ENCODE measurements at regions of chr16 and their contacts with region 1.

Region 1: DNA sequence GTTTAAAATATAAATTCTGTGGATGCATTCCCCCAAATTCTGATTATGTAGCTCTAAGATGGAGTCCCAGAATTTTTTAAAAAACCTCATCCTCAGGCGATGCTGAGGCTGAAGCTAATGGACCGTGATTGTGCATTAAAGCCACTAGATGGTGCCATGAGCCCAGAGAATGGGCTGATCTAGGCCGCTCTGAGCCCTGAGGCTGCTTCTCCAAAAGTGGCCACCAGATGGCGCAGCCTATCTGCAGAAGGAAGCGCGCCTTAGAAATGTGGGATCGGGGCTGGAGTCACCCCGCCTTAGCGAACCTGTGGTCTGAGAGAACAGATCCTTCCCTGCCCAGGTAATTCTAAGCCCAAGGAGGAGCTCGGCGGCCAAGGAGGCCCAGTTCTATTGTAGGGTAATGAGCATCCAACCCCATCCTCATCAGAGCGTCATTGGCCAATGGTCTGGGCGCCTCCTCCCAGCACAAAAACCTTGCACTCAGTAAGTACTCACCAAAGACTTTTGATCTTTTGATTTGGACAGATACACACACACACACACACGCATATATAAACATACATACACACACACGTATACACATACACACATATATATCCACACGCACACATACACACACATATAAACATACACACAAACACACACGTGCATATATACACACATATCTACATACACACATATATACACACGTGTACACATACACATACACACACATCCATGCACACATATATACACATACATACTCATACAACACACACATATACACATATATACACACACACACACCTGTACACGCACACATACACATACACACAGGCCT is 13.7 kb upstream of the MMP2 start:
- DNase-seq: peak; percentile 84 to 98
- H3K4me3 ChIP-seq: no peak overlapping the region
- H3K27ac ChIP-seq: no peak overlapping the region
- H3K4me1 ChIP-seq: no peaks in the 10 kb centered on the region
- H3K27me3 ChIP-seq: peaks cover 0 to 1% (median 0%) of the 10 kb centered on the region in 4 experiments; a peak in 3 of 7 replicates
- CTCF ChIP-seq: peak; percentile 85 to 100 (median 99)
- EP300 ChIP-seq: no peak; a peak in 1 of 3 replicates
- POLR2A ChIP-seq: no peak
- RAD21 ChIP-seq: peak; percentile 100

Region 2: DNA sequence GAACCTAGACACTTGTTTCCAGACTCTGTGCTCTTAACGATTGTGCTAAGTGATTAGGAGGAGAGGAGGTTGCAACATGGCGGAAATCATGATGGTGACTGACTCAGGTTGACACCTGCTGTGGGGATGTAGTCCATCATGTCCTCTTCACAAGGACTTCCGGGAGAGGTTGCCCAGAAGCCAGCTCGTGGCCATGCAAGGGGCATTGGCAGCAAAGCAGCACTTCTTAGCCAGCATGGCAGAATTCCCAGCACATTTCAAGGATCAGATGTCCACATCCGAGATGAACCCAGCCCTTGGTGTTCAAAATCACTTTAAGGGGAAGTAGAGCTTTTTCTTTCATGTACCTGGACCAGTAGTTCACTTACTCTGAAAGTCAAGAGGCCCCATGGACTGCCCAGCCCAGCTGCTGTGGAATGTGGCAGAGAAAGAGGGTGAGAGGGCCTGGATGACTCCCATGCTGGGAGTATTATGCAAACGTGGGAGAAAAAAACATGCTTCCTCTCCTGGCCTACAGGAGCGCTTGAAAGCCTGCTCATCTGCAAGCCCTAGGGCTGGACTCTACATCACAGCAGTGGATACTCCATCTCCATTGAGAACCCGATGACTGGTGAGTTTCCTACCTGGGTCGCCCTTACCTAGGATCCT is 75.7 kb before region 1 on chr16:
- CTCF ChIA-PET with region 1: no interaction called
- POLR2A ChIA-PET with region 1: no interaction called
- DNase-seq: no peak
- H3K4me3 ChIP-seq: no peak overlapping the region
- H3K27ac ChIP-seq: no peak overlapping the region
- H3K4me1 ChIP-seq: peaks cover 0 to 9% (median 7%) of the 10 kb centered on the region in 4 experiments; a peak in 6 of 7 replicates
- H3K27me3 ChIP-seq: no peaks in the 10 kb centered on the region
- CTCF ChIP-seq: no peak
- EP300 ChIP-seq: no peak
- POLR2A ChIP-seq: no peak
- RAD21 ChIP-seq: no peak

Region 3: GRCh38 chr16:55426865-55427484 is 38.3 kb before region 1 on chr16:
- CTCF ChIA-PET with region 1: interaction called, 10 read pairs
- POLR2A ChIA-PET with region 1: no interaction called
- DNase-seq: no peak
- H3K4me3 ChIP-seq: no peak overlapping the region
- H3K27ac ChIP-seq: no peak overlapping the region
- H3K4me1 ChIP-seq: no peaks in the 10 kb centered on the region
- H3K27me3 ChIP-seq: no peaks in the 10 kb centered on the region
- CTCF ChIP-seq: no peak
- EP300 ChIP-seq: no peak
- POLR2A ChIP-seq: no peak
- RAD21 ChIP-seq: no peak

Region 4: GRCh38 chr16:55502801-55503366 is 37.6 kb after region 1 on chr16:
- CTCF ChIA-PET with region 1: interaction called, 47 read pairs
- POLR2A ChIA-PET with region 1: no interaction called
- DNase-seq: no peak
- H3K4me3 ChIP-seq: no peak overlapping the region
- H3K27ac ChIP-seq: no peak overlapping the region
- H3K4me1 ChIP-seq: 0 out of 7 replicates have a peak, but pooled peaks cover 0 to 2% (median 0%) of the 10 kb centered on the region in 4 experiments
- H3K27me3 ChIP-seq: no peaks in the 10 kb centered on the region
- CTCF ChIP-seq: no peak
- EP300 ChIP-seq: no peak
- POLR2A ChIP-seq: no peak
- RAD21 ChIP-seq: no peak

Region 5: DNA sequence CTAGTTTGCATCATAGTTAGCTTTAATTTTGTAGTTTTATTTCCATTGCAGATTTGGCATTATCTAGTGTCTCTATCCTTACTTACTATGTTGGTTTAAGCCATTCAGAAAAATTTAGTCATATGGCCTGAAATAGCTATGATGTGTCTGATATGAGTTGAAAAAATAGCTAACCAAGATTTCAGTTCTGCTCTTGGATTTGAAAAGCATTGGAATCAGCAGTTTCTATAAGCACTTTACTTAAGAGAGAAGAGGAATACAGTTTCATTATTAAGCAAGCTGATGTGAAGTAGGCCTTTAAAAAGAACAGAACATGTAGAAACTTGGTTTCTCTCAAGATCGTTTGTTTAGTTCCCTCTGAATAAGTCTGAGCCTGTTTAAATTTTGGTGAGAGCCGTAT is 69.5 kb after region 1 on chr16:
- CTCF ChIA-PET with region 1: interaction called, 23 read pairs
- POLR2A ChIA-PET with region 1: no interaction called
- DNase-seq: no peak
- H3K4me3 ChIP-seq: no peak overlapping the region
- H3K27ac ChIP-seq: no peak overlapping the region
- H3K4me1 ChIP-seq: no peaks in the 10 kb centered on the region
- H3K27me3 ChIP-seq: no peaks in the 10 kb centered on the region
- CTCF ChIP-seq: no peak
- EP300 ChIP-seq: no peak
- POLR2A ChIP-seq: no peak
- RAD21 ChIP-seq: no peak

Region 6: DNA sequence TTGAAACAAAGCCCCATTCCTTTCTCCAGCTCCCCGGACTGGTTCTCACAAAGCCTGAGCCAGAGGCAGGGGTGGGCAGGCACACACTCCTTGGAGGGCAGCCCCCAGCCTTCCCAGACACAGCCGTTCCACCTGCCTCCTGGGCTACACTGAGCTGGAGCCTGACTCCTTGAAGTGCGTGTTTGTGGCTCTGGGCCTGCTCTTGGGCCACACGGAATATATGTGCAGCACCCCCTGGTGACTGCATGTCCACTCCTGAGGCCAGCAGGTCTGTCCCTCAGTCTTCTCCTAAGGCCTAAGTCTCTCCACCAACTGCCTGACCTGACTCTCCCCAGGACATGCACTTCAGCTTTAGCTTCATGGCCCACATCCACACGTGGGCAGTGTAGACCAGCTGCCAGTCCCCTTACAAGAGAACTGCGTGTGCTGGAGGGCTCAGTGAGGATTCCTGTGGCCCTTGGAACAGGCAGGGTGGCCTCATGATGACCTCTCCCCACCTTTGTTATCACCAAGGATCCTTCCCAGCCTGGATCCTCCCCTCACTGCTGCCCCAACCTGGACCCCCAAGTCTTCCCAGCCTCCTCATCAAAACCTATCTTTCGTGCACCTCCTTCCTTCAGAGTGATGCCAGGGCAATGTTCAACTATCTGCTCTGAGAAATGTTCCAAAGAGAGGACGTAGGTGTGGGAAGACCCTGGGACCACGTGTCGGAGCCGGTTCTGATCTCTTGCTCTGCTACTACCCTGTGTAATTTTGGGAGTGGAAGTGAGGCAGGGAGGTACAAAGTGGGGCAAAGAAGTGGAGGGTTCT is 178.1 kb after region 1 on chr16:
- CTCF ChIA-PET with region 1: interaction called, 11 read pairs
- POLR2A ChIA-PET with region 1: no interaction called
- DNase-seq: no peak
- H3K4me3 ChIP-seq: no peak overlapping the region
- H3K27ac ChIP-seq: no peak overlapping the region
- H3K4me1 ChIP-seq: no peaks in the 10 kb centered on the region
- H3K27me3 ChIP-seq: peaks cover 0 to 2% (median 0%) of the 10 kb centered on the region in 4 experiments; a peak in 2 of 7 replicates
- CTCF ChIP-seq: no peak
- EP300 ChIP-seq: no peak
- POLR2A ChIP-seq: no peak
- RAD21 ChIP-seq: no peak; a peak in 1 of 4 replicates

Region 7: DNA sequence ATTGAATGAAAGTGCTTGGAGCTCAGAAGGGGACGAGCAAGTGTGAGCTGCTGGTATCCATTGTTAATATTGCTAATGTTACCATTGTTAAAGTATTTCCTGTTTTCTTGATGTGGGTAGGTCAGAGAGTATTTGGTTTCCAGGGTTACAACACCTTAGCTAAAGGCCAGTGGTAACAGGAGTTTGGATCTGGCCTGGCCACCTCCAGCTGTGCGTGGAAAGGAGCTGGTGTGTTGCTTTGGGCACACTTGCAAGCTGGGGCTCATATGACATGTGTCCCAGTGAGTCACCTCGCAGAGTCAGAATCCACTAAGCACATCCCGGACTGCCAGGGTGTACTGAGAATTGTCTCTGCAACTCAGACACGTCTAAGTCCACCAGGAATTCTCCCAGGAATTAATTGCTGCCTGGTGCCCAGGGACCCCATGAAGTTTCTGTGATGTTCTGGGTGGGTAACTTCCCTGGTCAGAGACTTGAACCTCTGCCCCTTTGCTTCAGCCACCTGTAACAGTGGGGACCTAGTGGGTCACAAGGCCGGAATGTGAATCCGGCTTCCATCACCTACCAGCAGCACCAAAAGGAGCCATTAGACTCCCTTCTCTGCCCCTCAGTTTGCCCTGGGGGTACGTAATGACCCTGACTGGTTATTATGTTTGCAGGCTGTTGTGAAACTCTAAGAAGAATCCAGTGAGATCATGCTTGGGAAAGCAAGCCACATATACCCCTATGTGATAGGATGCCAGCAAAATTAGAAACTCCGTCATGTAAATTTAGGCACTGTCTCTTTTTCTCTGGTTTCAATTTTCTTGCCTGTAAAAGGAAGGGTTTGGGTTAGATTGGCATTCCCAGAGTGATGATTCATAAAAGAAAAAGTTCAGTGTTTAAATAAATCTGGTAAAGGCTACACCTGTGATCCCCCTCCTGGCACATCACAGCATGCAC is 203.3 kb after region 1 on chr16:
- CTCF ChIA-PET with region 1: interaction called, 11 read pairs
- POLR2A ChIA-PET with region 1: no interaction called
- DNase-seq: peak in 1 of 2 experiments; percentile 5
- H3K4me3 ChIP-seq: no peak overlapping the region
- H3K27ac ChIP-seq: no peak overlapping the region
- H3K4me1 ChIP-seq: peaks cover 2 to 11% (median 5%) of the 10 kb centered on the region in 4 experiments; a peak in 5 of 7 replicates
- H3K27me3 ChIP-seq: no peaks in the 10 kb centered on the region
- CTCF ChIP-seq: no peak
- EP300 ChIP-seq: no peak
- POLR2A ChIP-seq: no peak
- RAD21 ChIP-seq: no peak

Region 8: GRCh38 chr16:55842369-55843104 is 377.2 kb after region 1 on chr16:
- CTCF ChIA-PET with region 1: interaction called, 27 read pairs
- POLR2A ChIA-PET with region 1: no interaction called
- DNase-seq: peak in 1 of 2 experiments; percentile 43
- H3K4me3 ChIP-seq: no peak overlapping the region
- H3K27ac ChIP-seq: no peak overlapping the region
- H3K4me1 ChIP-seq: no peaks in the 10 kb centered on the region
- H3K27me3 ChIP-seq: no peaks in the 10 kb centered on the region
- CTCF ChIP-seq: peak in 2 of 3 experiments; percentile 60 to 70; a peak in 3 of 4 replicates
- EP300 ChIP-seq: no peak
- POLR2A ChIP-seq: no peak
- RAD21 ChIP-seq: peak; percentile 88

Region 9: DNA sequence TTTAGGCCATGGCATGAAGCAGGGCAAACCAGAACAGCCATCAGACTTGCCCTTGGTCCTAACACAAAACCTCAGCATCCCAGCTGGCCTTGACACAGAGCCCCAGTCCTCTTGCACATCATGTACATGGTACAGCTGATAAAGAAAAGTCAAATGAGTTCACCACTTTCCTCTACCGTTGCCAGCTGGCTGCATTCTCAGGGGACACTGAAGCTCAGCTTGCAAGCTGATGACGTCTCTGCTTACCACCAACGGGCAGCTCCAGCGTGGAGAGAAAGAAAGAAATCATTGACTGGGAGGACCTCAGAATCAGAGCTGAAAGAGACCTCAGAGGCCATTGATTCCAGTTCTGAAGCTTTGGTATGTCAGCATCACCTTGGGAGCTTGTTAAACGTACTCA is 490.6 kb after region 1 on chr16:
- CTCF ChIA-PET with region 1: no interaction called
- POLR2A ChIA-PET with region 1: no interaction called
- DNase-seq: no peak
- H3K4me3 ChIP-seq: no peak overlapping the region
- H3K27ac ChIP-seq: no peak overlapping the region
- H3K4me1 ChIP-seq: no peaks in the 10 kb centered on the region
- H3K27me3 ChIP-seq: no peaks in the 10 kb centered on the region
- CTCF ChIP-seq: no peak
- EP300 ChIP-seq: no peak
- POLR2A ChIP-seq: no peak
- RAD21 ChIP-seq: no peak

Measured in H1 (cell line).